SK-N-SH (cell line): ENCODE measurements at regions of chr2 and their contacts with region 1.

Region 1: DNA sequence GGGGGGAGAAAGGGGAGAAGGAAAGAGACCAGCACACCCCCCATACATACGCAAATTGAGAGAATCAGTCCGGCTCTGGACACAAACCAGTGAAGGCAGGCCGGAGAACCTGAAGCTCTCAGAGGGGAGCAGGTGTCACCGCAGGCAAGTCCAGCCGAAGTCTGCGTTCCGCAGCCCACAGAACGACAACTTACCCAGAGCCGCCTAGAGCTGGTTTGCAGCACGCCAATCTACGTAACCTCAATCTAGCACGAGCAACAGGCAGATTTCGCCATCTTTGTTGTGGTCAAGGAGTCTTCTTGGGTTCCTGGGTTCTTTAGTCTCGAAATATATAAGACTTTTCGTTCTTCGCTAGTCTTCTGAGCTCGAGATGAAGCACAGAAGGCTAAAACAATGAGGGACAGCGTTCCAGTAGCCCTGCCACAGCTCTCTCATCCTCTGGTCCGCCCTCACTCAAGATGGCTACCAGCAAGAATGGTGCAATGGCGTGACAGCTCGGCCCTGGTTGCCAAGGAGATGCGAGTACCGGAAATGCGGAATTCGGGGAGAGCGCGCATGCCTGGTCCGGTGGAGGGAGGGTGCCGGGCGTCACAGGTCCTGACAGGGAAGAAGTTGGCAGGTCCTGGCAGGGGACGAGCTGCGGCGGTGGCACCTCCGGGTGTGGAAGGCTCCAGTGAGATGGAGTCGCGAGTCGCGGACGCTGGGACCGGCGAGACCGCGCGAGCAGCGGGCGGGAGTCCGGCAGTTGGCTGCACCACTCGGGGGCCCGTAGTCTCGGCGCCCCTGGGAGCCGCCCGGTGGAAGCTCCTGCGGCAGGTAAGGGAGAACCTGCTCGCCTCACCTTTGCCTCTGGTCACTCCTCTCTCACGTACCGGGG is at the starts of genes CAMKMT and PREPL:
- DNase-seq: peak; percentile 99
- H3K4me3 ChIP-seq: peak within 1 kb of the TSS; percentile 89 to 91
- H3K27ac ChIP-seq: peak within 1 kb of the TSS; percentile 95 to 99
- H3K4me1 ChIP-seq: peaks cover 9 to 10% of the 10 kb centered on the region in 2 experiments; a peak in 2 of 4 replicates
- H3K27me3 ChIP-seq: no peaks in the 10 kb centered on the region
- CTCF ChIP-seq: 0 out of 2 replicates have a peak, but pooled peaks have one; percentile 7
- EP300 ChIP-seq: no peak; a peak in 1 of 4 replicates
- RAD21 ChIP-seq: 0 out of 2 replicates have a peak, but pooled peaks have one; percentile 19
- polyA plus RNA-seq, gene CAMKMT: 5.9 and 6.2 TPM in 2 replicates
- polyA plus RNA-seq, gene PREPL: 22.6 and 32.8 TPM in 2 replicates

Region 2: DNA sequence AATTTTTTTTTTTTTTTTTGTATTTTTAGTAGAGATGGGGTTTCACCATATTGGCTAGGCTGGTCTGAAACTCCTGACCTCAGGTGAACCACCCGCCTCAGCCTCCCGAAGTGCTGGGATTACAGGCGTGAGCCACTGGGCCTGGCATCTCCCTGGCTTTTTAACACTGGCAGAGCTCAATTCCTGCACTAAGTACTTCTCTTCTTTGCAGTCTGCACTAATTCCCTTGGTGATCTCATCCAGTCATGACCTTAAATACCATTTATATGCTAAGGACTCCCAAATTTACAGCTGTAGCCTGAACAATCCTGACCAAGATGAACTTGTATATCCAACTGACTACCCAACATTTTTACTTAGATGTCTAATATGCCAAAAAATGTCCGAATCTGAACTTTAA is 10.5 kb before region 1 on chr2:
- CTCF ChIA-PET with region 1: interaction called, 11 read pairs
- POLR2A ChIA-PET with region 1: interaction called, 4 read pairs
- DNase-seq: no peak
- H3K4me3 ChIP-seq: no peak overlapping the region
- H3K27ac ChIP-seq: no peak overlapping the region
- H3K4me1 ChIP-seq: peaks cover 0 to 18% of the 10 kb centered on the region in 2 experiments; a peak in 2 of 4 replicates
- H3K27me3 ChIP-seq: no peaks in the 10 kb centered on the region
- CTCF ChIP-seq: no peak
- EP300 ChIP-seq: no peak
- RAD21 ChIP-seq: no peak